Aorta (tissue), 5 donors: ENCODE measurements at regions of chr16 and their contacts with region 1.

Region 1: DNA sequence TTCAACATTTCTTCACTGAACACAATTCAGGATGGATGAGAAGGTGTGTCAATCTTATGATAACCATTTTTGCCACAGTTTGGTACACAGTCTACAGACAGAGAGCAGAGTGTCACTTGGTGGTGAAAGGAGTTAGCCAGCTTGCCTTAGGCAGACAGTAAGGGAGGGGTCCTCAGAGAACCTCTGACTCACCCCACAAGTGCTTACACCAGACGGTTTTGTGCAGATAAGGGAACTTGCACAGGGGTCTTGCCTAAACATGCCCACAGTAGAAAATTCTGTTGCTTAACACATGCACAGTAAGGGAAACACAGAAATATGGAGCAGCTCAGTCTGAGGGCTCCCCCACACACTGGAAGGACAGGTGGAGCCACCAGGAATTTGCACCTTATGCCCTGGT is 204.5 kb upstream of the CDH8 start:
- DNase-seq: no peak
- ATAC-seq: no peak
- H3K4me3 ChIP-seq: no peak overlapping the region
- H3K27ac ChIP-seq: no peak overlapping the region
- H3K4me1 ChIP-seq: no peaks in the 10 kb centered on the region
- H3K27me3 ChIP-seq: no peaks in the 10 kb centered on the region

Region 2: GRCh38 chr16:62225697-62226280 is 14.9 kb before region 1 on chr16:
- intact Hi-C with region 1: loop called in 1 of 2 experiments (anchors 1 kb)
- DNase-seq: peak; percentile 57 to 77
- ATAC-seq: no peak
- H3K4me3 ChIP-seq: no peak overlapping the region
- H3K27ac ChIP-seq: no peak overlapping the region
- H3K4me1 ChIP-seq: no peaks in the 10 kb centered on the region
- H3K27me3 ChIP-seq: no peaks in the 10 kb centered on the region